ENCODE measurements at regions of chr2 and their contacts with region 1.

Region 1: DNA sequence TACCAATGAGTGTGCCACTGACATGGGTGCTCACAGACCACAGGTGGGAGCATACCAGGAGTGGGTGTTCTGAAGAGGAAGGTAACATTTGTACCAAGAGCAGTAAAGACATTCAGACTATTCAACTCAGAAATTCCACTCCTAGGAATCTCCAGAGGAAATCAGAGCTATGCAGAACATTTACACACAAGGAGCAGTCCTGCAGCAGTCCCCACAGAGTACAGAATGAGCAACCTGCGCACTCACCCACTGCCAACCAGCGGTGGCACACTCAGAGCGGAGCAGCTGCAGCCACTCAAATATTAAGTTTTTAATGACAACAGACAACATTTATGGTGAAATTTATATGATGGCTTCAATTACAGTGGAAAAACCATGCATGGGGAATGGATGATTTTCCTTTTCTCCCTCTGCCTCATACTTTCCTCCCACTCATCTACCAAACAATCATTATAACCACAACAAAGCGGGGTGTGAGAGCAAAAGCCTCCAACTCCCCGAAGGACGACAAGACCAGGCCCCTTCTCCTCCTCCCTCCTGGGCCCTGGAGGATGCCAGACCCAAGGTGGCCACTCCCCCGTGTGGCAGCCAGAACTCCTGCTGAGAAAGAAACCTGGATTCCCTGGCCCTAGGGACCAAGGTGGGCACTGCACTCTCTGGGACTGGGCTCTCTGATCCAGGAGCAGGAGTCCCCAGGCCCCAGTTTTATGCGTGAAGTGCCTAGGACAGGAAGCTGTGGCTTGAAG is 5.4 kb downstream of the HS6ST1 start:
- DNase-seq: no peak
- H3K4me3 Mint-ChIP-seq: no peak overlapping the region
- H3K27ac Mint-ChIP-seq: no peak overlapping the region
- H3K4me1 Mint-ChIP-seq: peaks cover 38% of the 10 kb centered on the region
- H3K27me3 Mint-ChIP-seq: peaks cover 8% of the 10 kb centered on the region

Region 2: GRCh38 chr2:127735537-127736399 is 577.5 kb before region 1 on chr2:
- intact Hi-C with region 1: loop called (anchors 5 kb)
- DNase-seq: no peak
- H3K4me3 Mint-ChIP-seq: no peak overlapping the region
- H3K27ac Mint-ChIP-seq: no peak overlapping the region
- H3K4me1 Mint-ChIP-seq: peaks cover 24% of the 10 kb centered on the region
- H3K27me3 Mint-ChIP-seq: no peaks in the 10 kb centered on the region

Region 3: DNA sequence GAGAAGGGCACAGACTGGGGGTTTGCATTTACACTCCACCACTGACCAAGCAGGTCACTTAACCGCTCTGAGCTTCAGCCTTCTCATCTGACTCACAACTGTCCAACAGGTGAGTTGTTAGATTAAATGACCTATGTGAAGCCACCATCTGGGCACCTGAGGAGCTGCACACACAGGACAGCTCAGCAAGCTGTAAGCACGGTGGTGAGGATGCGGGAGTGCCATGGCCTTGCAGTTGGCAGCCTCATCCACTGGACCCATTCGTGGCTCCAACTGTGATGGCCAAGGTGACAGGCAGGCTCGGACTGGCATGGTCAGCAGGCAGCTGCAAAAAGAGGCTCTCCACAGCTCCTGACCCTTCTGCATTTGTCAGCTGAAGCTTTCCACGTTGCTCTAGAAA is 404.2 kb before region 1 on chr2:
- intact Hi-C with region 1: no loop called
- DNase-seq: no peak
- H3K4me3 Mint-ChIP-seq: no peak overlapping the region
- H3K27ac Mint-ChIP-seq: no peak overlapping the region
- H3K4me1 Mint-ChIP-seq: no peaks in the 10 kb centered on the region
- H3K27me3 Mint-ChIP-seq: peaks cover 3% of the 10 kb centered on the region